ENCODE measurements at regions of chr2 and their contacts with region 1.

Region 1: GRCh38 chr2:68943581-68944568 is 8.8 kb downstream of the GKN2 start:
- DNase-seq: peak; percentile 68
- H3K4me3 ChIP-seq: no peak overlapping the region
- H3K27ac ChIP-seq: no peak overlapping the region; a peak in 1 of 4 replicates
- H3K4me1 ChIP-seq: peaks cover 0 to 2% of the 10 kb centered on the region in 2 experiments; a peak in 1 of 4 replicates
- H3K27me3 ChIP-seq: no peaks in the 10 kb centered on the region
- CTCF ChIP-seq: peak; percentile 78
- EP300 ChIP-seq: no peak
- RAD21 ChIP-seq: peak; percentile 78

Region 2: DNA sequence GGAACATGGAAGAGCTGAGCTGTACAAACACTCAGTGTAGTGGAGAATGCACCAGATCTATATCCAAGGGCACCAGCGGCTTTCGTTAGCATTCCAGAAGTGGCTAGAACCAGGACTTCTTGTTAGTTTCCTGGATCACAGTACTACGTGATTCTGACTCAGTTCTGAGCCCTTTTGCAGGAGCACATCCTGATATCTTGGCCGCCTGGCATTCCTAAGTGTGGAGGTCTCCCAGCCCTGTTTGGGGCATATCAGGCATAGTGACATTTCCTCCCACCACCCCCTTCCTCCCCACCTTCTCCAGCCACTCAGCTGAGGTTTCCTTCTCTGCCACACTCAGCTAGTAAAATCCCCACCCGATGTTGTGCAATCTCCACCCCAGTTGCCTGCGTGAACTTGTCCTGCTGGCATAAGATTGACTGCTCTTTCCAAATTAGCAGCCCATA is 136.0 kb before region 1 on chr2:
- CTCF ChIA-PET with region 1: no interaction called
- POLR2A ChIA-PET with region 1: no interaction called
- DNase-seq: no peak
- H3K4me3 ChIP-seq: no peak overlapping the region
- H3K27ac ChIP-seq: no peak overlapping the region
- H3K4me1 ChIP-seq: peaks cover 0 to 2% of the 10 kb centered on the region in 2 experiments; a peak in 1 of 4 replicates
- H3K27me3 ChIP-seq: peaks cover 6% of the 10 kb centered on the region; the same call in 1 of the 2 replicates
- CTCF ChIP-seq: no peak
- EP300 ChIP-seq: no peak
- RAD21 ChIP-seq: no peak

Region 3: GRCh38 chr2:68959001-68959400 is 15.1 kb after region 1 on chr2:
- CTCF ChIA-PET with region 1: interaction called, 19 read pairs
- POLR2A ChIA-PET with region 1: no interaction called
- DNase-seq: no peak
- H3K4me3 ChIP-seq: no peak overlapping the region
- H3K27ac ChIP-seq: no peak overlapping the region
- H3K4me1 ChIP-seq: no peaks in the 10 kb centered on the region
- H3K27me3 ChIP-seq: no peaks in the 10 kb centered on the region
- CTCF ChIP-seq: no peak
- EP300 ChIP-seq: no peak
- RAD21 ChIP-seq: no peak

Region 4: GRCh38 chr2:69012310-69013141 is 68.7 kb after region 1 on chr2:
- CTCF ChIA-PET with region 1: interaction called, 22 read pairs
- POLR2A ChIA-PET with region 1: no interaction called
- DNase-seq: peak; percentile 19
- H3K4me3 ChIP-seq: peak overlapping the region; percentile 85 to 98
- H3K27ac ChIP-seq: peak overlapping the region; percentile 89 to 92
- H3K4me1 ChIP-seq: peaks cover 13 to 27% of the 10 kb centered on the region in 2 experiments
- H3K27me3 ChIP-seq: no peaks in the 10 kb centered on the region
- CTCF ChIP-seq: peak; percentile 80
- EP300 ChIP-seq: no peak
- RAD21 ChIP-seq: peak; percentile 79

Region 5: DNA sequence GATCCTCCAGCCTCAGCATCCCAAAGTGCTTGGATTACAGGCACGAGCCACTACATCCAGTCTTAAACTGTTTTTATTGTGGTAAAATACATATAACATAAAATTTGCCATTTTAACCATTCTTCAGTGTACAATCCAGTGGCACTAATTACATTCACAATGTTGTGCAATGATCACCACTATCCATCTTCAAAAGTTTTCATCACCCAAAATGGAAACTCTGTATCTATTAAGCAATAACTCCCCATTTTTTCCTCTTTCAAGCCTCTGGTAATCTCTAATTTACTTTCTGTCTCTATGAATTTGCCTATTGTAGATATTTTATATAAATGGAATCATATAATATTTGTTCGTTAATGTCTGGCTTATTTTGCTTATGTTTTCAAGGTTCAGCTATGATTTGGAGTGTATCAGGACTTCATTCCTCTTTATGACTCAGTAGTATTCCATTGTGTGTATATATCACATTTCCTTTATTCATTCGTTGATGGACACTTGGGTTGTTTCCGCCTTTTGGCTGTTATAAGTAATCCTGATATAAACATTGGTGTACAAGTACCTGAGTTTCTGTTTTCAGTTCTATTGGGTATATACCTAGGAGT is 371.4 kb after region 1 on chr2:
- CTCF ChIA-PET with region 1: interaction called, 10 read pairs
- POLR2A ChIA-PET with region 1: no interaction called
- DNase-seq: no peak
- H3K4me3 ChIP-seq: no peak overlapping the region
- H3K27ac ChIP-seq: no peak overlapping the region
- H3K4me1 ChIP-seq: no peaks in the 10 kb centered on the region
- H3K27me3 ChIP-seq: no peaks in the 10 kb centered on the region
- CTCF ChIP-seq: no peak
- EP300 ChIP-seq: no peak
- RAD21 ChIP-seq: no peak